Esophagus muscularis mucosa (tissue), 4 donors: ENCODE measurements at regions of chr2 and their contacts with region 1.

Region 1: DNA sequence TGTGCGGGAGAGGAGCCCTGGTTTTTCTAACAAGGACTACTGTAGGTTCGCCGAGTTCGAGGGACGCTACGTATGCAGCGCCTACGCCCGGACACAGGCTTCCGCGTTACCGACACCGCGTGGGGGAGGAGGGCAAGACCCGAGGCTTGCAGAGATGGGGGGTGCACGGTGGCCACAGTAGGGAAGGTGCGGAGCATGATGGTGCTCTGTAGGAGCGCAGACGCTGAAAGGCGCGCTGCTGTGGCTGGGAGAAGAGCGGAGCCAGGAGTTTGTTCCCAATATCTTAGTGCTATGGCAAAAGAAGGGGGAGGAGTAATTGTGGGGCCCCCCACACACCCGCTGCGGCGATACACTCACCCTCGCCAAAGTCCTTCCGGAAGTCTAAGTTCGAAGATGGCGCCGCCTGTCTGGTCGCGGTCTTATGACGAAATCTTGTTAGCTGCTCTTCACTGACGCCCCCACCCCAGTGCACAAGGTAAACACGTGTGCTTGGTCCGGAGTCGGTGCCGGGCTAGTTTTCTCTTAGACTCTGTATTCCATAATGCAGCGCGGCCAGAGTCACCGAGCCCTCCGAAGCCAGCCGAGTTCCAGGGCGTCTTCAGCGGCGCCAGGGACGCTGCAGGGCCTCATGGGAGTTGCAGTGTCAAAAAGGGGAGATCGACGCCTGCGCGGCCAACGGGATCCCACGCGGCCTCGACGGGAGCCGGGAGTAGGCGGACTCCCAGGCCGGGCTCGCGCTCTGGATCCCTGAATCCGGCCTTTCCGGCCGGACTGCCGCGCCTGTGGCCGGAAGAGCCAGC is at the start of gene GTF3C2:
- DNase-seq: peak; percentile 99
- H3K4me3 ChIP-seq: peak within 1 kb of the TSS; percentile 83 to 94 (median 91)
- H3K27ac ChIP-seq: peak within 1 kb of the TSS; percentile 85 to 92 (median 88)
- H3K4me1 ChIP-seq: peaks cover 27 to 47% (median 40%) of the 10 kb centered on the region in 4 donors
- H3K27me3 ChIP-seq: no peaks in the 10 kb centered on the region
- CTCF ChIP-seq: peak in 2 of 3 experiments; percentile 9 to 17
- EP300 ChIP-seq: no peak
- POLR2A ChIP-seq: no peak
- total RNA-seq, gene GTF3C2: 27.5 to 44.3 (median 31.6) TPM

Region 2: DNA sequence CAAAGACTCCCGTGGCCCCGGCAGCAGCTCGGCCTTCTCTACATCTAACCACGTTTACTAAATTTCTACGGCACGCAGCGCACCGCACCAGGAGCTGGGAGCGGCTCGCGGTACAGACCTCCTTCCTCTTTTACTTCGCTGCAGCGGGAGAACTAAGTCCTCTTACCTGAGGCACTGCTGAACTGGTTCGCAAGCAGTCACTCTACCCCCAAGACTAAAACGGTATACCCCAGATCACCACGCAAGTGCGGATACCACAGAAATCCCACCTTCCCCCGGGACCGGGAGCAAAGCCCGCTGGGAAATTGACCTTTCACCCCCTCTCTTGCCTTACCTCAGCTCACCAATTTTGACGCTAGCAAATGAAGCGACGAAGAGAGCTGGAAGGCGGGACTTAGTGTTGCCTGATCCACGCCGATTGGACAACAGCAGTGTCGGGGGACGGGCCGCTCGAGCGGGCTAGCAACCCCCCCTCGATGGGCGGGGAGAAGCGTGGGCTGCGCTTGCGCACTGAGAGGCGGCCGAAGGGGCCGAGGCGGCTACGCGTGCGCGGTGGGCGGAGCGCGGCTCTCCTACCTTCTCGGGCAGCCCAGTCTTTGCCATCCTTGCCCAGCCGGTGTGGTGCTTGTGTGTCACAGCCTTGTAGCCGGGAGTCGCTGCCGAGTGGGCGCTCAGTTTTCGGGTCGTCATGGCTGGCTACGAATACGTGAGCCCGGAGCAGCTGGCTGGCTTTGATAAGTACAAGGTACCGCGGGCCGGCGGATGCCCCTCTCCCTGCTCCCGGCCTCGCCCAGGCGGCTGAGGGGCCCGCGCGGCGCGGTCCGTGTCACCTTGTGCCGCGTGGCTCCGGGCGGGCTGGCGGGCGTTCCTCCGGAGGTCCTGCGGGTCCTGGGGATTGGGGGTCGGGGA is 1010.8 kb before region 1 on chr2 and contains the start of gene SELENOI:
- intact Hi-C with region 1: no loop called
- DNase-seq: peak; percentile 99
- H3K4me3 ChIP-seq: peak within 1 kb of the TSS; percentile 78 to 89 (median 86)
- H3K27ac ChIP-seq: peak within 1 kb of the TSS; percentile 93 to 97 (median 94)
- H3K4me1 ChIP-seq: peaks cover 16 to 35% (median 30%) of the 10 kb centered on the region in 4 donors
- H3K27me3 ChIP-seq: no peaks in the 10 kb centered on the region
- CTCF ChIP-seq: no peak
- EP300 ChIP-seq: no peak
- POLR2A ChIP-seq: peak; percentile 88
- total RNA-seq, gene SELENOI: 6.4 to 11.2 (median 9.3) TPM

Region 3: DNA sequence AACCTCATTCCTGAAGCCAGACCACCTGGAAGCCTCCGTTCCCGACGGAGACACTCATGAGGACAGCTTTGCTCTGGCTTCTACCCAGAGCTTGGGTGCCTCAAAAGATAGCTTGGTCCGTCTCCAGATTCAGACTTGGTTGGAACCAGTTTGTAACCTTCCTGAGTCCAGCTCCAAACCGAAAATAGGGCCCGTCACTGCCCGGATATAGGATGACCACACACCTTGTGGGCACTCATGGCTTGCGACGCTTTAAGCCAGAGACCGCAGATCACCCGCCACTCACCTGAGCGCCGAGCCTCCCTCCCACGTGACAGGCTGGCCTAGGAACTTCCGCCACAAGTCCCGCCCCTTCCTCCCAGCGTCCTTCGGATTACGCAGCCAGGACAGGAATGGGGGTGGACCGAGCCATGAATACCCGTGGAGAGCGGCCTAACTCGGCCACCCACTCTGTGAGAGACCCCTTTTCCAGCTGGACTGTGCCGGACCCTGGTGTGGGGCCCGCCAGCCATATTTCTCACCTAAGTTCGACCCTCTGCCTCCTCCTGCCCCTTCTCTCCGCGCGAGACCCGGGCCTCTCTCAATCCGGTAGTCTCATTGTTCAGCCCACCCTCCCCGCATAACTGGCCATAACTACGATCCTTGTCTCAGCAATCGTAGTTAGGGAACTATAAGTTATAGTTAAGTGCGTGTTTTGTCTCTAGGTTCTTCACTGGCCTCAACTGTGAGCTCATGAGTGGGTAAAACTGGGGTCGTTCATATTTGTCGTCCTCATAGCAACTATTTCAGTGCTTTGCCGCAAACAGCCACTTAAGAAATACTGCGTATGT is 33.6 kb before region 1 on chr2 and contains the start of gene MPV17:
- intact Hi-C with region 1: loop called (anchors 5 kb)
- DNase-seq: peak; percentile 98
- H3K4me3 ChIP-seq: peak within 1 kb of the TSS; percentile 78 to 95 (median 84)
- H3K27ac ChIP-seq: peak within 1 kb of the TSS; percentile 93 to 98 (median 95)
- H3K4me1 ChIP-seq: peaks cover 29 to 34% (median 31%) of the 10 kb centered on the region in 4 donors
- H3K27me3 ChIP-seq: no peaks in the 10 kb centered on the region
- CTCF ChIP-seq: no peak
- EP300 ChIP-seq: no peak
- POLR2A ChIP-seq: peak; percentile 71
- total RNA-seq, gene MPV17: 46.7 to 70.2 (median 60.6) TPM